CD8-positive, alpha-beta T cell (primary cell): ENCODE measurements at regions of chr16 and their contacts with region 1.

Region 1: GRCh38 chr16:3503523-3503922 is 2.7 kb downstream of the CLUAP1 start:
- DNase-seq: peak in 8 of 9 experiments; percentile 19 to 77 (median 64)
- ATAC-seq: peak; percentile 22
- H3K4me3 ChIP-seq: peak overlapping the region in 1 of 2 experiments; percentile 45
- H3K4me3 Mint-ChIP-seq: peak overlapping the region; percentile 71
- H3K27ac ChIP-seq: peak overlapping the region; percentile 50 to 71
- H3K27ac Mint-ChIP-seq: peak overlapping the region; percentile 96
- H3K4me1 ChIP-seq: peaks cover 59% of the 10 kb centered on the region
- H3K4me1 Mint-ChIP-seq: peaks cover 66% of the 10 kb centered on the region
- H3K27me3 ChIP-seq: no peaks in the 10 kb centered on the region
- H3K27me3 Mint-ChIP-seq: no peaks in the 10 kb centered on the region
- CTCF ChIP-seq: no peak

Region 2: GRCh38 chr16:3150346-3151218 is 352.9 kb before region 1 on chr16:
- CTCF ChIA-PET with region 1: no interaction called
- POLR2A ChIA-PET with region 1: interaction called, 3 read pairs
- intact Hi-C with region 1: loop called in 1 of 2 experiments (anchors 5 kb)
- DNase-seq: peak; percentile 94 to 100 (median 97)
- ATAC-seq: peak; percentile 82
- H3K4me3 ChIP-seq: peak overlapping the region; percentile 53 to 93
- H3K4me3 Mint-ChIP-seq: peak overlapping the region; percentile 88
- H3K27ac ChIP-seq: peak overlapping the region; percentile 53 to 68
- H3K27ac Mint-ChIP-seq: peak overlapping the region; percentile 88
- H3K4me1 ChIP-seq: peaks cover 23% of the 10 kb centered on the region
- H3K4me1 Mint-ChIP-seq: peaks cover 27% of the 10 kb centered on the region
- H3K27me3 ChIP-seq: no peaks in the 10 kb centered on the region
- H3K27me3 Mint-ChIP-seq: no peaks in the 10 kb centered on the region
- CTCF ChIP-seq: no peak

Region 3: GRCh38 chr16:3182608-3183444 is 320.7 kb before region 1 on chr16:
- CTCF ChIA-PET with region 1: no interaction called
- POLR2A ChIA-PET with region 1: no interaction called
- intact Hi-C with region 1: loop called in 1 of 2 experiments (anchors 1 kb)
- DNase-seq: peak in 6 of 9 experiments; percentile 38 to 74 (median 64)
- ATAC-seq: peak; percentile 64
- H3K4me3 ChIP-seq: peak overlapping the region; percentile 38 to 43
- H3K4me3 Mint-ChIP-seq: peak overlapping the region; percentile 78
- H3K27ac ChIP-seq: no peak overlapping the region
- H3K27ac Mint-ChIP-seq: peak overlapping the region; percentile 66
- H3K4me1 ChIP-seq: peaks cover 19% of the 10 kb centered on the region
- H3K4me1 Mint-ChIP-seq: peaks cover 19% of the 10 kb centered on the region
- H3K27me3 ChIP-seq: peaks cover 31 to 38% of the 10 kb centered on the region in 2 experiments
- H3K27me3 Mint-ChIP-seq: peaks cover 65% of the 10 kb centered on the region
- CTCF ChIP-seq: no peak

Region 4: DNA sequence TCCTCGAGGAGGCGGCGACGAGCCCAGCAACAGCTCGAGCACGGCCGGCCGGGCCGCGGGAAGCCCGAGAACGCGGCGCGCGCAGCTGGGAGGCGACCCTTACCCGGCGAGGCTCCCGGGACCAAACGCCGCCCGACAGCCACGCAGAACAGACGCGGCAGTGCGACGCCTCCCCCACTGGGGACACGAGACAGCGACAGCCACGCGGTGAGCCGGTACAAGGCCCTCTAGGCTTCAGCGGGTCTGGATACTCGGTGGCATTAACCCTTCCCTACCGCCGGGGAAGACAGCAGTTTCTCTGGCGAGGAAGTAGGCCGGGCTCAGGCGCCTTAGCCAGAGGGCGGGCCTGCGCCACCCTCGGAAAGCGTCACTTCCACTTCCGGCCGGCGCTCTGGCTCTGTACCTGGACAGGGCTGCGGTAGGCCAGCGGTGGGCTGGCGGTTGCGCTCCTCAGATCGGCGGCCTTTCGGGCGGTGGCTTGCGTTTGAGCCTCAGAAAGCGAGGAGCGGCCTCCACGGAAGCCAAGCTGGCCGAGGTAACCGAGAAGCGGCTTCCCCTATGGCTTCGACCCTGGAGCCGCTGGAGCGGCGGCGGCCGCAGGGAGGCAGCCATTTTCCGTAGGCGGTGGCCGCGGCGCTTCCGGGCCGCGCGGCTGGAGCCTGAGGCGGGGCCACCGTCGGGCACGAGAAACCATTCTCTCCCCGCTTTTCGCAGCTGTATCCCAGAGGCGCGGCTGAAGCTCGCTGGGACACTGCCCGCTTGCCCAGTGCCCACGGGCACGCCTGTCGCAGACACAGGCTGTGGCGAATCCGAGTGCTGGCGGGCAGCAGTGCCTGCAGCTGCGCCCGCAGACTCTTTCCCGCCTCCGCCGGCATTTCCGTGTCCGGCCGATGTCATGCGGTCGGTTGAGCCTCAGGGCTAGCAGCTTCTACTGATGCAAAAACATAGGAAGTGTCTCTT is 198.1 kb before region 1 on chr16 and contains the starts of genes TIGD7 and ZNF75A:
- CTCF ChIA-PET with region 1: no interaction called
- POLR2A ChIA-PET with region 1: no interaction called
- intact Hi-C with region 1: loop called in 1 of 2 experiments (anchors 2 kb)
- DNase-seq: peak; percentile 60 to 94 (median 83)
- ATAC-seq: peak; percentile 97
- H3K4me3 ChIP-seq: peak within 1 kb of the TSS; percentile 90 to 93
- H3K4me3 Mint-ChIP-seq: peak within 1 kb of the TSS; percentile 83
- H3K27ac ChIP-seq: peak within 1 kb of the TSS; percentile 86 to 91
- H3K27ac Mint-ChIP-seq: peak within 1 kb of the TSS; percentile 90
- H3K4me1 ChIP-seq: peaks cover 14% of the 10 kb centered on the region
- H3K4me1 Mint-ChIP-seq: peaks cover 30% of the 10 kb centered on the region
- H3K27me3 ChIP-seq: no peaks in the 10 kb centered on the region
- H3K27me3 Mint-ChIP-seq: no peaks in the 10 kb centered on the region
- CTCF ChIP-seq: no peak
- total RNA-seq, gene TIGD7: 4.1 to 4.2 TPM
- total RNA-seq, gene ZNF75A: 59.6 to 61.3 TPM

Region 5: DNA sequence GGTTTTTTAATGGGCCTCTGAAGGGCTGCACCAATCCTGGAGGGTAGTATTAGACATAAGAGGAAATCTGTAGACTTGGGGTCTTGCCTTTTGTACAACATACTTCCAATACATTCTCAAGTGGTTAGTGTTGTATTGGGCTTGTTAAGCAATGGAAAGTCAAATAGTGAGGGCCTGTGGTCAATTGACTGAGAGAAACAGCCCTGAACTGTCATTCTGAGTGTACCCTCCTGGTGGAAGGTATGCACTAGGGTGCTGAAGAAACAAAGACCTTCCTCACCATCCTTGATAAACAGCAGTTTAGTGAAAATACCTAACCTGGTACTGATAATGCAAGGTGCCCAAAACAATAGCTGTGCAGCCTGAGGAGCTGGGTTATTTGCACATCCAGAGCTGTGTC is 125.6 kb before region 1 on chr16:
- CTCF ChIA-PET with region 1: no interaction called
- POLR2A ChIA-PET with region 1: no interaction called
- intact Hi-C with region 1: no loop called
- DNase-seq: no peak
- ATAC-seq: no peak
- H3K4me3 ChIP-seq: no peak overlapping the region
- H3K4me3 Mint-ChIP-seq: no peak overlapping the region
- H3K27ac ChIP-seq: no peak overlapping the region
- H3K27ac Mint-ChIP-seq: no peak overlapping the region
- H3K4me1 ChIP-seq: no peaks in the 10 kb centered on the region
- H3K4me1 Mint-ChIP-seq: no peaks in the 10 kb centered on the region
- H3K27me3 ChIP-seq: no peaks in the 10 kb centered on the region
- H3K27me3 Mint-ChIP-seq: no peaks in the 10 kb centered on the region
- CTCF ChIP-seq: no peak

Region 6: DNA sequence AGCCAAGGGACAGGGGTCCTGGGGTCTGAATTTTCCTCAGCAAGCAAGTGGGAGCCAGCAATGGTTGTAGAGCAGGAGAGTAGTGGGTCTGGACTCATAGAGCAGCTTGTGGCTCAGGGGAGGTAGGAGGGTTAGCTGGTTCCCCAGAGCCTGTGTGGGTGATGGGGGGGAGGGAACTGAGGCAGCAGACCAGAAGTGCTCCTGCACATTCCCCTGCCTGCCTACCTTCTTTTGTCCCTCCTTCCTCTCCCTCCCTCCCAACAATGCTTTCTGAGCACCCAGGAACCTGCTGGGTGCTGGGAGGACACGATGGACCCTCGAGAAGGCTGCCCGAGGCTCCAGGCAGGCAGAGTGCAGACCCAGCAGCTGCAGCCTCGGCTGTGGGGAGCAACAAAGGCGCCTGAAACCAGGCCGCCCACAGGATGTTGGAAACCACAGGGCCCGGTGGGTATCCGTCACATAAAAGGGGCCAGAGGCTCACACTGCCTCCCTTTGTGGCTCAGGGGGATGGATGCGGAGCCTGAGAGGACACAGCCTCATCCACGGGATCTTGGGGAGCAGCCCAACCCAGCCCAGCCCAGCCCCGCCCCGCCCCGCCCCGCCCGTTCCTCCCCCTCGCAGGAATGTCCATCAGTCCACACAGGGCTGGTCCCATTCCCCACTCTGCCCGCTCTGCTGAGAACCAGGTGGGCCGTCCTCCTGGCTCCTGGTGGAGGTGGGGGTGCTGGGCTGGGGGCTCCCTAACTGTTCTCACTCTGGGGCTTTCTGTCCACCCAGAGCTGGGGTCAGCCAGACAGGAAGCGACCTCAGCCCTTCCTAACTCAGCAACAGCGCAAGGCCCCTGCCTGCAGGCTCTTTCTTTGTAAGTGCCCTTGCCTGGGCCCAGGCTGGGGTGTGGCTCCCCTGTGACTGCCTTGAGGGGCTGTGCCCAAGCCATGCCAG is 75.4 kb after region 1 on chr16:
- CTCF ChIA-PET with region 1: no interaction called
- POLR2A ChIA-PET with region 1: no interaction called
- intact Hi-C with region 1: loop called in 1 of 2 experiments (anchors 5 kb)
- DNase-seq: peak; percentile 16 to 81 (median 62)
- ATAC-seq: peak; percentile 30
- H3K4me3 ChIP-seq: peak overlapping the region; percentile 35 to 47
- H3K4me3 Mint-ChIP-seq: peak overlapping the region; percentile 85
- H3K27ac ChIP-seq: peak overlapping the region; percentile 75 to 84
- H3K27ac Mint-ChIP-seq: peak overlapping the region; percentile 91
- H3K4me1 ChIP-seq: peaks cover 44% of the 10 kb centered on the region
- H3K4me1 Mint-ChIP-seq: peaks cover 49% of the 10 kb centered on the region
- H3K27me3 ChIP-seq: no peaks in the 10 kb centered on the region
- H3K27me3 Mint-ChIP-seq: no peaks in the 10 kb centered on the region
- CTCF ChIP-seq: no peak

Region 7: DNA sequence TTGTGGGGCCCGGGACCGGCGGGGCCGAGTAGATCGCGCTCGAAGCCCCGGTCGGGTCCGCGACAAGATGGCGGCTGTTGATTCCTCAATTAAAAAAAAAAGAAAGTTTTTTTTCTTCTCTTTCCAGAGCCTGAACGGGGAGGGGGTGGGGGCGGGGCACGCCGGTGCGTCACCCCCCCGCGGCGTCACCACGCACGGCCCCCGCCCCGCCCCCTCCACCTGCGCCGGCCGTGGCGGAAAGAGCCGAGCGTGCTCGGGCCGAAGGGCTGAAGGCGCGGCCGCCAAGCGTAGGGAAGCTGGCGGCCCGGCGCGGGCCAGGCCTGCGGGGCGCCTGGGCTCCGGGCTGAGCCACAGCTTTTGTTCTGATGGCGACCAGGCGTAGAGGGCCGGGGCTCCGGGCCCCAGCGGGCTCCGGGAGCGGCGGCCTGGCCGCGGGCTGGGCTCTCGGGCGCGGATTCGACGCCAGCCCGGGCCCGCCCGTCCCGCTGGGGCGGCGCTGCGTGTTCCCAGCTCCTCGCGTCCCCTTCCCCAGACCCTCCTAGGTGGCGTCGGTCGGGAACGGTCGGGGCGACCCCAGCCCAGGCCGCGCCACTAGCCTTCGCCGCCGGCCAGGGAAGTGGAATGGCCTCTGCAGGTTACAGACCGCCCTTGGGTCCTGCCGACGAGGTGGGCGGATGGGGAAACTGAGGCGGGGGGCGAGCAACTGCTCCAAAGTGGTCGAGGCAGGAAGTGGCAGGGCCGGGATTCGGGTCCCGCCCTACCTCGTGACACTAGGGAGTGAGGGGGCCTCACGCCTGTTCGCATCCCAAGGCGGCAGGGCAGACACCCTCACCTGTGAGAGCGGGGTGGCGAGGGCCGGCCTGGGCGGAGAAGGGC is 377.3 kb after region 1 on chr16 and contains the start of gene CREBBP:
- CTCF ChIA-PET with region 1: no interaction called
- POLR2A ChIA-PET with region 1: no interaction called
- intact Hi-C with region 1: loop called in 1 of 2 experiments (anchors 1 kb)
- DNase-seq: peak; percentile 80 to 95 (median 87)
- ATAC-seq: peak; percentile 84
- H3K4me3 ChIP-seq: peak within 1 kb of the TSS; percentile 70 to 80
- H3K4me3 Mint-ChIP-seq: peak within 1 kb of the TSS; percentile 88
- H3K27ac ChIP-seq: peak within 1 kb of the TSS in 1 of 2 experiments; percentile 71
- H3K27ac Mint-ChIP-seq: peak within 1 kb of the TSS; percentile 94
- H3K4me1 ChIP-seq: peaks cover 32% of the 10 kb centered on the region
- H3K4me1 Mint-ChIP-seq: peaks cover 38% of the 10 kb centered on the region
- H3K27me3 ChIP-seq: no peaks in the 10 kb centered on the region
- H3K27me3 Mint-ChIP-seq: peaks cover 2% of the 10 kb centered on the region
- CTCF ChIP-seq: no peak
- total RNA-seq, gene CREBBP: 186 to 189 TPM